ENCODE measurements at regions of chr2 and their contacts with region 1.

Region 1: GRCh38 chr2:190069936-190070696 is 7.6 kb upstream of the MSTN start:
- DNase-seq: no peak
- ATAC-seq: peak; percentile 64 to 84 (median 72)
- H3K4me3 ChIP-seq: no peak overlapping the region
- H3K27ac ChIP-seq: no peak overlapping the region
- H3K4me1 ChIP-seq: peaks cover 9% of the 10 kb centered on the region
- H3K27me3 ChIP-seq: no peaks in the 10 kb centered on the region
- CTCF ChIP-seq: peak; percentile 76

Region 2: GRCh38 chr2:189661148-189661956 is 408.8 kb before region 1 on chr2 and contains the start of gene ASNSD1:
- intact Hi-C with region 1: loop called in 1 of 2 experiments (anchors 10 kb)
- DNase-seq: peak; percentile 99 to 100
- ATAC-seq: peak; percentile 98 to 99 (median 99)
- H3K4me3 ChIP-seq: peak within 1 kb of the TSS; percentile 88
- H3K27ac ChIP-seq: peak within 1 kb of the TSS; percentile 93
- H3K4me1 ChIP-seq: peaks cover 20% of the 10 kb centered on the region
- H3K27me3 ChIP-seq: no peaks in the 10 kb centered on the region
- CTCF ChIP-seq: peak; percentile 97
- total RNA-seq, gene ASNSD1: 50.8 to 67.0 (median 62.0) TPM

Region 3: GRCh38 chr2:189798312-189799029 is 271.6 kb before region 1 on chr2:
- intact Hi-C with region 1: loop called (anchors 5 kb)
- DNase-seq: no peak
- ATAC-seq: peak in 3 of 4 donors; percentile 60 to 87 (median 73)
- H3K4me3 ChIP-seq: no peak overlapping the region
- H3K27ac ChIP-seq: peak overlapping the region; percentile 2
- H3K4me1 ChIP-seq: peaks cover 28% of the 10 kb centered on the region
- H3K27me3 ChIP-seq: no peaks in the 10 kb centered on the region
- CTCF ChIP-seq: peak; percentile 55

Region 4: DNA sequence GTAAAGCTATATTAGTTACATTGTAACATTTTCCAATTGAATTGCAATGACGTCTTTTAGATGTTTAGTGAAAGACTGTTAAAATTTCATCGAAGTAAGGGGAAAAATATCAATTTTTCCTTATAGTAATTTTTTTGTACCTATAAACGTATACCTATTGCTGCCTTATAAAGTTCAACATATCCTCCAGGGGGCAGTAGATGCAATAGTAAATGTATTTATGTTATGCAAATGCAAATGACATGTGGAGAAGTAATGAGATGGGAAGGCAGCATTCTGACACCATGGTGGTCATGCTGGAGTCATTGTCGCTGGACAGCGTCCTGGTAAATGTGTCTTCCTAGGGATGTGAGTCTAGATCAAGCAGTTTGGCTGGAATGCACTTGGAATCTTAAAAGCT is 46.3 kb before region 1 on chr2:
- intact Hi-C with region 1: loop called (anchors 2 to 5 kb)
- DNase-seq: no peak
- ATAC-seq: peak in 2 of 4 donors; percentile 51 to 64
- H3K4me3 ChIP-seq: no peak overlapping the region
- H3K27ac ChIP-seq: no peak overlapping the region
- H3K4me1 ChIP-seq: no peaks in the 10 kb centered on the region
- H3K27me3 ChIP-seq: no peaks in the 10 kb centered on the region
- CTCF ChIP-seq: peak; percentile 64